Heart left ventricle (tissue), 16 donors: ENCODE measurements at regions of chr7 and their contacts with region 1.

Region 1: GRCh38 chr7:92447345-92448204 is at the start of gene GATAD1:
- DNase-seq: peak; percentile 93 to 94 (median 94)
- ATAC-seq: peak; percentile 94 to 100 (median 99)
- H3K4me3 ChIP-seq: peak within 1 kb of the TSS; percentile 81 to 100 (median 92)
- H3K27ac ChIP-seq: peak within 1 kb of the TSS; percentile 79 to 98 (median 96)
- H3K4me1 ChIP-seq: peaks cover 0 to 19% (median 11%) of the 10 kb centered on the region in 12 donors
- H3K27me3 ChIP-seq: no peaks in the 10 kb centered on the region
- CTCF ChIP-seq: peak in 10 of 12 donors; percentile 87 to 98 (median 94)
- POLR2A ChIP-seq: peak in 1 of 2 donors; percentile 70
- total RNA-seq, gene GATAD1: 8.5 to 20.5 (median 11.8) TPM

Region 2: GRCh38 chr7:91826377-91826776 is 621.2 kb before region 1 on chr7:
- intact Hi-C with region 1: loop called in 2 of 10 experiments (anchors 5 kb)
- DNase-seq: no peak
- ATAC-seq: no peak
- H3K4me3 ChIP-seq: no peak overlapping the region
- H3K27ac ChIP-seq: no peak overlapping the region
- H3K4me1 ChIP-seq: peaks cover 0 to 5% (median 0%) of the 10 kb centered on the region in 12 donors
- H3K27me3 ChIP-seq: no peaks in the 10 kb centered on the region
- CTCF ChIP-seq: no peak
- POLR2A ChIP-seq: no peak

Region 3: DNA sequence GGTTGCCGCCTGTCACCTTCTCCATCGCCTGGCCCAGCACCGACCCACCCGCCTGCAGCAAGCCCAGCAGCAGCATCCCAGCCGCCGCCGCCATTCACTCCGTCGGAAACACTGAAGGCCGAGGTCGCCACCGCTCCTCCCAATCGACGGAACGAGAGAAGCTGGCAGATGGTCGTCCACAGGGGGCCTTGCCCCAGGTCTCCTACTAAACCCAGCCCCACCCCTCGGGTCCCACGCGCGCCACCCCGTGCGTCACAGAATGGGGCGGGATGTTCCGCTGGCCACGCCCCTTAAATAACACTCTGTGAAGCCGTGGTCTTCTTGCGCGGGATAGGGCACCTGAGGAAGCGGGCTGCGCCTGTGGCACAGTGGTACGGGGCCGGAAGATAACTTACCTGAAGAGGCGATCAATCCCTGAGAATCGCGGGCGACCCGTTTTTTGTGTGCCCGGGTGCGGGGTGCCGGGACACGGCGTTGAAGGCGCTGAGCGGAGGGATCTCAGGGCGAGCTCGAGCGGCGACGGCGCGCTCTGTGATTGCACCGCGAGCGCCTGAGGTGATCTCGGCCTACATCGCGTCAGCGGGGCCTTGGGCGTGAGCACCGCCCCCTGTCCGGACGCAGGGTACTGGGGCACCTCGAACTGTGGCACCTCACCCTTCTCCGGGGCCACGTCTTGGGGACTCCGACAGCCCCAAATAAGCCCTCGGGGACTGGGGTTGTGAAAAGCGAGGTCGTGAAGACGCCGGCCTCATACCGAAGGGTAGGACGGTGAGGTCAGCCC is 313.1 kb before region 1 on chr7 and contains the start of gene CYP51A1:
- intact Hi-C with region 1: loop called in 2 of 10 experiments (anchors 5 kb)
- DNase-seq: peak; percentile 93 to 95 (median 94)
- ATAC-seq: peak; percentile 95 to 98 (median 98)
- H3K4me3 ChIP-seq: peak within 1 kb of the TSS; percentile 72 to 99 (median 94)
- H3K27ac ChIP-seq: peak within 1 kb of the TSS; percentile 62 to 97 (median 96)
- H3K4me1 ChIP-seq: peaks cover 0 to 26% (median 16%) of the 10 kb centered on the region in 12 donors
- H3K27me3 ChIP-seq: no peaks in the 10 kb centered on the region
- CTCF ChIP-seq: peak in 4 of 12 donors; percentile 8 to 38 (median 22)
- POLR2A ChIP-seq: peak; percentile 40 to 64
- total RNA-seq, gene CYP51A1: 16.6 to 42.2 (median 32.7) TPM

Region 4: DNA sequence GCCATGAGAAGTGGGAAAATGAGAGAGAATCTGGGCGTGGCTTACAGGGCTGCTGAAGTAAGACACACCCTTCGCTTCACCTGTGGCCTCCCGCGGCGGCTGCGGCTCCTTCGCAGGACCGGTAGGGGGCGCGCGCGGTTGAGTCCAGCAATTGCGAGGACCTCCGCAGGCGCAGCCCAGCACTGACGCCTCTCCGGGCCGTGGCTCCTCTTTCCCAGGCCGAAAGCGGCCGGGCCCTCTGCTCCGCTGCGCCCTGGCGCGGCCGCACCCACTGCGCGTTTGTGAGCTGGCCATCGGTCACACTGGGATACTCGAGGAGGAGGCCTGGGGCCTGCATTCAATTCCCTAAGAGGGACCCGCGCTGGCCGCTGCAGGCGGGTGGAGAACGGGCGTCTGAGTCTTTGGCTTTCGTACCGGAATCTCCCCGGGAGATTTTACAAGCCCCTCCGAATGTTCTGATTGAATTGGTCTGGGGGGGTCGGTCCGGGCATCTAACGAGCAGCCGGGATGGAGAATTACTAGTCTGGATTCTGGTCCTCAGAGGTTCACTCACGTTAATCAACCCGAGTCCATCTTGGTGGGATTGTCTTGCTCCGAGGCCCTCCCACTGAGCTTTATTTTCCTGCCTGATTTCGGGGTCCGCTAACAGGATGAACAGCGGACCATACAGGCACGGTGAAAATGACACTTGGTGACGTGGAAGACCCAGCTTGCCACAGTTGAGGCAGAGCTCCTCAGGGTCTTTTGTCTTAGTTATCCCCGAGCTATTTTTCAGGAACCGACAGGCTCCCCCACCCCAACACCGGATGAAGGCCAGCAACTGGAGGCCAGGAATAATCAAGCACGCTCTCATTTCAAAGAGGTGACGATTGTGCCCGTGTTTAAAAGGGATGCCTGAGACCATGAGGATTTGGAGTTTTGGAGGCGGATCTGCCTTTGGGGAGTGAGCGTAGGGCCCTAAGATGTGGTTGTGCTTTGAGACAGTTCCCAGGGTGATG is 268.3 kb before region 1 on chr7 and contains the start of gene LRRD1:
- intact Hi-C with region 1: loop called in 6 of 10 experiments (anchors 2 to 10 kb)
- DNase-seq: peak; percentile 82 to 94 (median 87)
- ATAC-seq: peak; percentile 91 to 99 (median 98)
- H3K4me3 ChIP-seq: peak within 1 kb of the TSS; percentile 16 to 67 (median 60)
- H3K27ac ChIP-seq: peak within 1 kb of the TSS in 11 of 12 donors; percentile 10 to 85 (median 70)
- H3K4me1 ChIP-seq: peaks cover 0 to 9% (median 0%) of the 10 kb centered on the region in 12 donors
- H3K27me3 ChIP-seq: no peaks in the 10 kb centered on the region
- CTCF ChIP-seq: peak; percentile 95 to 100 (median 98)
- POLR2A ChIP-seq: no peak
- total RNA-seq, gene LRRD1: 0.17 to 0.33 (median 0.19) TPM in 4 of 9 donors, not detected in the others

Region 5: DNA sequence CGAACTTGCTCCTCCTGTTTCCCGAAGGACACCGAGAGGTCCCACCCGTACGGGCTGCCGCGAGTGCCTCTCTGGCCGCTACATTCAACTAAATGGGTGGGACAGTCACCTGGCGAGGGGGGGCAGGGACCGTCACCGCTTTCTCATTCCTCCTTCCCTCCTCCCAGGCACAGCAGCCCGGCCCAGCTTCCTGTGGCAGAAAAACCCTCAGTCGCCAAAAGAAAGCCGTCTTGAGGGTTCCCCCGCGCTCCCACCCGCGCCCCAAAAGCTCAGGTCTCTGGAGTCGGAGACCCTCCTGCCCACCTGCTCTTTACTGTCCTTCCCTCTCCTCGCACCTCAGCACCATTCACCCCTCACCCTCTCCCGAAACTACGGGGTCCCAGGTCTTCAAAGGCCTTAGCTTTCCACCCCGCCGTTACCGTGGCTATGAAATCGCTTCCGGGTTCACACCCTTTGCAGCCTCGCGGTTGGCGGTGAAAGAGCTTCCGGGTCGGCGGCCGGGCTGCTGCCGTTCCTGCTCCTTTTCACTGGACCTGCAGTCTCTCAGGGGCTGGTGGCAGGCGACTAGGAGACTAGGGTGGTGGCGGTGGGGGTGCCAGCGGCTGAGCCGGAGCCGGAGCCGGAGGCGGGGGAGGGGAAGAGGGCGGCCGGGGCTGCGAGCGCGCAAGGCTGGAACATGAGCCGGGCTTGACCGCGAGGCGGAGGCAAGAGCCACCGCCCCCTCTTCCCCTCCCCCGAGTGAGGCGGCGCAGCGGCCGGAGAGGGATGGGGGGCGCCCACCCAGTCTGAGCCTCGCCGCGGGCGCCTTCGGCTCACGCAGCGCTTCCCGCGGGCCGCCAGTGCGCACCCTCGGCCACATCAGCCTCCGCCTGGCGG is 201.8 kb before region 1 on chr7 and contains the starts of genes ANKIB1 and KRIT1:
- intact Hi-C with region 1: loop called in 8 of 10 experiments (anchors 2 to 10 kb)
- DNase-seq: peak; percentile 89 to 94 (median 91)
- ATAC-seq: peak; percentile 90 to 97 (median 96)
- H3K4me3 ChIP-seq: peak within 1 kb of the TSS; percentile 67 to 94 (median 82)
- H3K27ac ChIP-seq: peak within 1 kb of the TSS; percentile 62 to 94 (median 90)
- H3K4me1 ChIP-seq: peaks cover 0 to 43% (median 30%) of the 10 kb centered on the region in 12 donors
- H3K27me3 ChIP-seq: no peaks in the 10 kb centered on the region
- CTCF ChIP-seq: peak in 7 of 12 donors; percentile 20 to 49 (median 27)
- POLR2A ChIP-seq: peak in 1 of 2 donors; percentile 63
- total RNA-seq, gene ANKIB1: 21.2 to 67.9 (median 46.6) TPM
- total RNA-seq, gene KRIT1: 22.1 to 45.0 (median 31.0) TPM

Region 6: GRCh38 chr7:92421676-92422435 is 25.7 kb before region 1 on chr7:
- intact Hi-C with region 1: loop called in 4 of 10 experiments (anchors 1 kb)
- DNase-seq: no peak
- ATAC-seq: no peak
- H3K4me3 ChIP-seq: no peak overlapping the region
- H3K27ac ChIP-seq: no peak overlapping the region
- H3K4me1 ChIP-seq: peaks cover 0 to 10% (median 0%) of the 10 kb centered on the region in 12 donors
- H3K27me3 ChIP-seq: peaks cover 0 to 13% (median 9%) of the 10 kb centered on the region in 9 donors
- CTCF ChIP-seq: no peak
- POLR2A ChIP-seq: no peak

Region 7: DNA sequence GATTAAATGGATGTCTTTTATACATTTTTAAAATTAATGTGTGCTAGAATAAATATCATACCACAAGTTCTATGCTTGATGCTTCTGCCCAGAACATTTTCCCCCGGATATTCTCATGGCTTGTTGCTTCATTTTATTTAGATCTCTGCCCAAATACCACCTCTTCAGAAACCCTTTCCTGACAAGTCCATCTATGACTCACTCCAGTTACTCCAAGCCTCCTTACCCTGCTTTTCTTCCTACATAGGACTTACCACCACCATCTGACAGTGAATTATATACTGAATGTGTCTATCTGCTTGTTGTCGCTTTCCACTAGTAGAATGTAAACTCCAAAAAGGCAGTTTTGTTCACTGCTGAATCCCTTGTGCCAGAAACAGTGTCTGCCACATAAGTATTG is 49.3 kb after region 1 on chr7:
- intact Hi-C with region 1: no loop called
- DNase-seq: no peak
- ATAC-seq: no peak
- H3K4me3 ChIP-seq: no peak overlapping the region
- H3K27ac ChIP-seq: no peak overlapping the region
- H3K4me1 ChIP-seq: no peaks in the 10 kb centered on the region
- H3K27me3 ChIP-seq: no peaks in the 10 kb centered on the region
- CTCF ChIP-seq: no peak
- POLR2A ChIP-seq: no peak